ENCODE measurements at regions of chr3 and their contacts with region 1.

Region 1: DNA sequence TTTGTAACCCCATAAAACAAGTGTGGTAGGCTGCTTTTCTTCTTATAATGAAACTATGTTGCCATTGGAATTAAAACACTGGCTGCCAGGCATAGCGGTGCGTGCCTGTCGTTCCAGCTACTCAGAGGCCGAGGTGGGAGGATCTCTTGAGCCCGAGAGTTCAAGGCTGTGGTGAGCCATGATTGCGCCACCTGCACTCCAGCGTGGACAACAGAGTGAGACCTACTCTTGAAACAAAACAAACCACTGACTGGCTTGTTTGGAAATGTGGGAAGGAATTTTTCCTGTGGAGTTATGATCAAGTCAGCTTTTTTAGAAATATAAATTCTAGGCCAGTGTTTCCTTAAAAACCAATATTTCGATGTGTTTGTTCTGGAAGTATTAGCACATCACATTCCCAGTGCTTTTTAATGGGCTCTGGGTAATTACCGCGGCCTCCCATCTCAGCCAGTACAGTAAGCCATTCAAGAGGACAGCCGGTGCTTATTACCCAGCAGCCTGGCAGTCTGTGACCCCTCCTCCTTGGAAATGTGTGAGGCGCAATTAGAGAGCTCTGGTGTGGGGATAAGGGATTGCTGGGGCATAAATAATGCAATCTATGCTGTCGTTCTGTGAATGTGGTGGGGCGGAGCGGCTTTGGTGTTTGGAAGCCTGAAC is 58.3 kb upstream of the TRAK1 start:
- DNase-seq: peak; percentile 98
- ATAC-seq: peak; percentile 84
- H3K4me3 ChIP-seq: no peak overlapping the region
- H3K27ac ChIP-seq: peak overlapping the region; percentile 79; the same call in 1 of the 2 replicates
- H3K4me1 ChIP-seq: peaks cover 45% of the 10 kb centered on the region
- H3K27me3 ChIP-seq: no peaks in the 10 kb centered on the region
- CTCF ChIP-seq: no peak
- POLR2A ChIP-seq: no peak
- RAD21 ChIP-seq: peak; percentile 30; the same call in 1 of the 2 replicates

Region 2: GRCh38 chr3:42055293-42055692 is 22.5 kb after region 1 on chr3:
- CTCF ChIA-PET with region 1: no interaction called
- POLR2A ChIA-PET with region 1: no interaction called
- dilution Hi-C with region 1: no loop called
- in situ Hi-C with region 1: no loop called
- intact Hi-C with region 1: loop called (anchors 1 kb)
- DNase-seq: peak; percentile 85
- ATAC-seq: peak; percentile 65
- H3K4me3 ChIP-seq: no peak overlapping the region
- H3K27ac ChIP-seq: peak overlapping the region; percentile 75; the same call in 1 of the 2 replicates
- H3K4me1 ChIP-seq: peaks cover 26% of the 10 kb centered on the region
- H3K27me3 ChIP-seq: no peaks in the 10 kb centered on the region
- CTCF ChIP-seq: no peak
- POLR2A ChIP-seq: no peak
- RAD21 ChIP-seq: no peak

Region 3: GRCh38 chr3:42061713-42062408 is 29.0 kb after region 1 on chr3:
- CTCF ChIA-PET with region 1: no interaction called
- POLR2A ChIA-PET with region 1: no interaction called
- dilution Hi-C with region 1: no loop called
- in situ Hi-C with region 1: no loop called
- intact Hi-C with region 1: loop called (anchors 2 kb)
- DNase-seq: peak; percentile 90
- ATAC-seq: peak; percentile 93
- H3K4me3 ChIP-seq: no peak overlapping the region
- H3K27ac ChIP-seq: peak overlapping the region; percentile 45; the same call in 1 of the 2 replicates
- H3K4me1 ChIP-seq: peaks cover 13% of the 10 kb centered on the region
- H3K27me3 ChIP-seq: no peaks in the 10 kb centered on the region
- CTCF ChIP-seq: no peak
- POLR2A ChIP-seq: no peak
- RAD21 ChIP-seq: no peak